H1 (cell line): ENCODE measurements at regions of chr17 and their contacts with region 1.

Region 1: GRCh38 chr17:17812211-17813057 is 24.4 kb downstream of the SREBF1 start:
- DNase-seq: peak in 1 of 2 experiments; percentile 99
- H3K4me3 ChIP-seq: peak overlapping the region in 1 of 4 experiments; percentile 14; a peak in 1 of 8 replicates
- H3K27ac ChIP-seq: no peak overlapping the region
- H3K4me1 ChIP-seq: peaks cover 0 to 20% (median 12%) of the 10 kb centered on the region in 4 experiments; a peak in 6 of 7 replicates
- H3K27me3 ChIP-seq: peaks cover 6 to 23% (median 16%) of the 10 kb centered on the region in 4 experiments
- CTCF ChIP-seq: peak; percentile 93 to 97 (median 97)
- EP300 ChIP-seq: no peak
- POLR2A ChIP-seq: no peak
- RAD21 ChIP-seq: peak; percentile 86 to 92

Region 2: DNA sequence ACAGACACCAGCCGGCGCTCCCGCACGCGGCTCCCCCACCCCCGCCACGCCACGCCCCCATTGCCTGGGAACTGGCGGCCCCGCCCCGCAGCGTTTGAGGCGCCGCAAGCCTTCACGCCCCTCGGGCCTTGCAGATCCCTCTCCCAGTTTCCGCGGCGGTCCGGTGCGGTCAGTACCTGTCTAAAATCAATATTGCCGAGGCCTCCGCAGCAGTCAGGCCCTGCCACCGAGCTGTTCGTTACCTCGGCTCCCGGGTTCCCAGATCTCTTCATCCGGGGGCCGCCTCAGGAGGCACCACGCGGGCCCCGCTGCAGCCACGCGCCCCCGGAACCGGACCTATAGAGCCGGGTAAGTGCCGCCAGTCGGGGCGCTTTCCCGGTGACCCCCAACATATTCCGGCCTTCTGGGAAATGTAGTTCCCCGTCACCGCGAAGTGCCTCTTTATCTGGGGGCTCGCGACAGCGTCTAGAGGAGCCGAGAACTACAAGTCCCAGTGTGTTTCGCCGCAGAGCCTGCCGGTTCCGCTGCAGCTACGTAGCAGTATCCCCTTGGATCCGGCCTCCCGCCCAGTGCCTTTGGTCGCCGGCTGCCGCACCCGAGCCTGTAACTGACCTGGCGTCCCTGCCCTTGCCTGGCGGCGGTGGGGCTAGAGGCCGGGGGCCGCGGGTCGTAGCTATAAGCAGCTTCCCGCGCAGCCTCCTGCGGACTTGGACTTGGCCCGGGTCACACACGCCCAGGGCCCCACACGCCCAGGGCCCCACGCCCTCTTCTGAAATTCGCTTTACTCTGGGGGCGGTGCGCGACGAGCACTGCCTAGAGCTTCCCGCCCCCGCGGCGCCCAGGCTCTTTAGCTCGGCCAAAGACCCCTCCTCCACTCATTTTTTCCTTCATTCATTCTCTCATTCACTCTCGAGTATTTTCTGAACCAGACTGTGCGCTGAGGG is 220.8 kb before region 1 on chr17 and contains the start of gene PEMT:
- CTCF ChIA-PET with region 1: no interaction called
- POLR2A ChIA-PET with region 1: no interaction called
- DNase-seq: peak; percentile 90 to 93
- H3K4me3 ChIP-seq: peak within 1 kb of the TSS; percentile 69 to 87 (median 86)
- H3K27ac ChIP-seq: peak within 1 kb of the TSS; percentile 60; the same call in 1 of the 2 replicates
- H3K4me1 ChIP-seq: peaks cover 0 to 10% (median 2%) of the 10 kb centered on the region in 4 experiments; a peak in 4 of 7 replicates
- H3K27me3 ChIP-seq: no peaks in the 10 kb centered on the region
- CTCF ChIP-seq: no peak
- EP300 ChIP-seq: peak in 1 of 2 experiments; percentile 9; a peak in 1 of 3 replicates
- POLR2A ChIP-seq: peak; percentile 4 to 78; a peak in 2 of 3 replicates
- RAD21 ChIP-seq: no peak
- total RNA-seq, gene PEMT: 40.1 and 42.0 TPM in 2 replicates

Region 3: GRCh38 chr17:17774009-17774881 is 38.2 kb before region 1 on chr17:
- CTCF ChIA-PET with region 1: interaction called, 12 read pairs
- POLR2A ChIA-PET with region 1: interaction called, 5 read pairs
- DNase-seq: no peak
- H3K4me3 ChIP-seq: no peak overlapping the region
- H3K27ac ChIP-seq: no peak overlapping the region
- H3K4me1 ChIP-seq: peaks cover under 1 to 8% (median 3%) of the 10 kb centered on the region in 4 experiments; a peak in 5 of 7 replicates
- H3K27me3 ChIP-seq: peaks cover 0 to 5% (median under 1%) of the 10 kb centered on the region in 4 experiments; a peak in 2 of 7 replicates
- CTCF ChIP-seq: peak; percentile 51 to 60 (median 51); a peak in 3 of 4 replicates
- EP300 ChIP-seq: no peak
- POLR2A ChIP-seq: no peak
- RAD21 ChIP-seq: peak; percentile 54 to 66

Region 4: GRCh38 chr17:17800504-17801021 is 11.9 kb before region 1 on chr17:
- CTCF ChIA-PET with region 1: interaction called, 36 read pairs
- POLR2A ChIA-PET with region 1: interaction called, 8 read pairs
- DNase-seq: no peak
- H3K4me3 ChIP-seq: no peak overlapping the region
- H3K27ac ChIP-seq: no peak overlapping the region
- H3K4me1 ChIP-seq: peaks cover 0 to 9% (median 0%) of the 10 kb centered on the region in 4 experiments; a peak in 3 of 7 replicates
- H3K27me3 ChIP-seq: no peaks in the 10 kb centered on the region
- CTCF ChIP-seq: peak; percentile 9 to 25 (median 23)
- EP300 ChIP-seq: no peak
- POLR2A ChIP-seq: no peak
- RAD21 ChIP-seq: peak; percentile 24 to 49; a peak in 3 of 4 replicates

Region 5: DNA sequence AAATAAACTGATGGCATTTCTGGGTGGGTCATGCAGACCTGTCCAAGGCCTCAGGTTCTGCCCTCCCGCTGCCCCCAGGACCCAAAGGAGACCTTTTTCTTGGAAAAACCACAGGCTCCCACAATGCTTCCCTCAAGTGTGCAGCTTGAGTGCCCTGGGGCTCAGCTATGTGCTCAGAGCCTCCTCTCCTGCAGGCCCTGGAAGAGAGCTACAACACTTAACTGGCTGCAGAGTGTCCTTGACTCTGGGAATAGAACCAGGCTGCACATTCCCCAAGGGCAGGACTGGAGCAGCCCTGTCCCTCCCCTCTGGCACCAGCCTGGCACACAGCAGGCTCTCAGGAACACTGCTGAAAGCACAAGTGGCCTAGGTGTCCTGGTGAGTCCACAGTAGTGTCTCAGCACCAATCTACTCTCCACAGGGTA is 29.2 kb after region 1 on chr17:
- CTCF ChIA-PET with region 1: interaction called, 30 read pairs
- POLR2A ChIA-PET with region 1: interaction called, 532 read pairs
- DNase-seq: no peak
- H3K4me3 ChIP-seq: no peak overlapping the region
- H3K27ac ChIP-seq: no peak overlapping the region
- H3K4me1 ChIP-seq: peaks cover 19 to 44% (median 34%) of the 10 kb centered on the region in 4 experiments
- H3K27me3 ChIP-seq: no peaks in the 10 kb centered on the region; a peak in 1 of 7 replicates
- CTCF ChIP-seq: no peak
- EP300 ChIP-seq: no peak
- POLR2A ChIP-seq: no peak
- RAD21 ChIP-seq: no peak

Region 6: GRCh38 chr17:17890773-17891759 is 78.6 kb after region 1 on chr17:
- CTCF ChIA-PET with region 1: interaction called, 96 read pairs
- POLR2A ChIA-PET with region 1: no interaction called
- DNase-seq: no peak
- H3K4me3 ChIP-seq: no peak overlapping the region
- H3K27ac ChIP-seq: no peak overlapping the region
- H3K4me1 ChIP-seq: peaks cover 3 to 6% (median 4%) of the 10 kb centered on the region in 4 experiments
- H3K27me3 ChIP-seq: no peaks in the 10 kb centered on the region
- CTCF ChIP-seq: peak; percentile 88 to 94 (median 92)
- EP300 ChIP-seq: no peak
- POLR2A ChIP-seq: no peak
- RAD21 ChIP-seq: peak; percentile 87 to 92